ENCODE measurements at regions of chr22 and their contacts with region 1.

Region 1: DNA sequence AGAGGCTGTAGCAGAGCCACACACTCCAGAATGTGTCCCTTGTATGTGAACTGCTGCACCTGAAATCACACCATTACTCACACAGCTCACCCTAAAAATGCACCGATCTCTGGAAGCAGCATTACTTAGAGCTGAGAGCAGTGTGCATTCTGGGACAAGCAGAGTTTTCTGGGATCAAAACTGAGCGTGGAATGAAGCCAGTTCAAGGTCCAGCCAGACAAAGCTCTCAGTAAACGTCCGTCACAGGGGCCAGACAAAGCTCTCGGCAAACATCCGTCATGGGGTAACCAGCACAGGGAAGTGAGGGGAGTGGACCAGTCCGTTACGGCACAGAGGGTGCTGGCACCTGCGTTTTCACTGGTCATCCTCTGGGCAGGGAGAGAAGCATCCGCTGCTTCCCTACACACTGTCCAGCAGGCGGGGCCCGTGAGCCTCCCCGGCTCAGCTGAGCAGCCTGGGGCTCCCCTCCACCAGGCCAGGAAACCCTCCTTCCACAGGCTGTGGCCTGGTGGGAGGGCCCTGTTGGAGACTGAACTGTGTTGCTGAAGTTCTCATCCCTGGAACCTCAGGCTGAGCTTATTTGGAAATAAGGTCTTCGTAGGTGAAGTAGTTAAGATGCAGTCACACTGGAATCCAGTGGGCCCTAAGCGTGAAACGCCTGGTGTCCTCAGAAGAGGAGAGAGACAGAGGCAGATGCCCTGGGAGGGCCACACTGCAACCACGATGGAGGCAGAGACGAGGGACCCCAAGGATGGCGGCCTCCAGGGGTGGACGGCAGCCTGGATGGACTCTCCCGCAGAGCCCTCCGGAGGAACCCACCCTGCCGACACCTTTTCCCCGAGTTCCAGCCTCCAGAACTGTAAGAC is 883.9 kb downstream of the BRD1 start:
- DNase-seq: peak; percentile 33 to 77
- H3K4me3 ChIP-seq: no peak overlapping the region
- H3K27ac ChIP-seq: no peak overlapping the region
- H3K4me1 ChIP-seq: no peaks in the 10 kb centered on the region
- H3K27me3 ChIP-seq: no peaks in the 10 kb centered on the region; a peak in 2 of 7 replicates
- CTCF ChIP-seq: peak; percentile 93 to 97 (median 95)
- EP300 ChIP-seq: no peak
- POLR2A ChIP-seq: no peak
- RAD21 ChIP-seq: peak; percentile 77 to 87

Region 2: DNA sequence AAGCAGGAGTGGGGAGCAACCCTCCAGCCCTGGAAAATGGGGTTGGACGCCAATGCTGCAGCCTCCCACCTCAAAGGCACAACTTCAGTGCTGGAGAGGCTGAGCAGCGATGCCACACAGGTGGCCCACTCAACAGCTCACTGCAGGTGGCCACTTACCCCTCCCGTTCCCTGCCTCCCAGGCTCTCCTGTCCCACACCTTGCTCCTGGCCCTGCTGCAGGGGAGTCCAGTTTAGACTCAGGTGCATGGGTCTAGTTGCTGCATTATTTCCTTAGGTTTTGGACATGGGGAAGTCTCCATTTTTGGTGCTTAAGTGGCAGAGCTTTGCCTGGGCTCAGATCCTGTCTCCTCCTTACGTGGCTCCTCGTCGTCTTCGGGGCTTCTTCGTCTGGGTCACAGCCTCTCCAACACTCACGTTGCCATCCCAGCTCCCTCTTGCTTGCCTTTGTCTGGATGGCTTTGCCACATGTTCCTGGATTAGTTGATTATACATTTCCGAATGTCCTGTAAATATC is 14.5 kb before region 1 on chr22:
- CTCF ChIA-PET with region 1: interaction called, 11 read pairs
- POLR2A ChIA-PET with region 1: no interaction called
- DNase-seq: peak in 1 of 2 experiments; percentile 43
- H3K4me3 ChIP-seq: no peak overlapping the region
- H3K27ac ChIP-seq: no peak overlapping the region
- H3K4me1 ChIP-seq: no peaks in the 10 kb centered on the region
- H3K27me3 ChIP-seq: 0 out of 7 replicates have a peak, but pooled peaks cover 0 to 3% (median 0%) of the 10 kb centered on the region in 4 experiments
- CTCF ChIP-seq: no peak
- EP300 ChIP-seq: no peak
- POLR2A ChIP-seq: no peak
- RAD21 ChIP-seq: no peak

Region 3: DNA sequence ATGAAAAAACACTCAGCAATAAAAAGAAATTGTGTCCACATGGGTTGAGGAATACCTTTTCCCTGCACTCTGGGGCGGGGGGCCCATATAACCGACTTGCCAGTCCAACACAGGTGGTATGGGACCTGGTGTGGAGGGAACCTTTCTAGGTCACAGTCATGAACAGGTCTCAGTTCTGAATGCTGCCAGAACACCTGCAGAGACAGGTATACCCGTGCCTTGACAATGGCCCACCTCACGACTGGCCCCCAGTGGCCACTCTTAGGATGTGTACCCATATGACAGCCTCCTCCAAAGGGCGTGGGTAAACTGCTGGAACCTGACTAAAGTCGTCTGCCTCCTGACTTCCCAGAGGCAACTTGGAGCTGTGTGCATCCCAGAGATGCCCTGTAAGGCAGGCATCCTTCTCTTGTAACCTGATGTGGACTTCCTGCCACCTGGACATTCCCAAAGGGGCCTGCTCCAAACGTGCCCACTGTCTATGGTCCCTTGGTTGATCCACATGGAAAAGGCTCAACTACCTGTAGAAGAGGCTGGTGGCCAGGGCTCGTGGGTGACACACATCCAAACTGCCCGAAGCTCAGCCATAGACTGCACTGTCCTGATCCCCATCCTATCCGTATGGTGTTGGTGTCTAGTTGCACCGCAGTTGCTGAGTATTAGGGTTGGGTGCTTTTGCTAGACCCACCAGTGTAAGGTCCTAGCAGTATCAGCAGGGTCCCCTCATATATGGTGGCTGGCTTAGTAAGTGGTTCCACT is 24.6 kb after region 1 on chr22:
- CTCF ChIA-PET with region 1: interaction called, 22 read pairs
- POLR2A ChIA-PET with region 1: no interaction called
- DNase-seq: peak in 1 of 2 experiments; percentile 66
- H3K4me3 ChIP-seq: no peak overlapping the region
- H3K27ac ChIP-seq: no peak overlapping the region
- H3K4me1 ChIP-seq: no peaks in the 10 kb centered on the region; a peak in 1 of 7 replicates
- H3K27me3 ChIP-seq: no peaks in the 10 kb centered on the region
- CTCF ChIP-seq: peak; percentile 79 to 91 (median 85)
- EP300 ChIP-seq: no peak
- POLR2A ChIP-seq: no peak
- RAD21 ChIP-seq: peak; percentile 78 to 85

Region 4: GRCh38 chr22:49055406-49055805 is 111.6 kb after region 1 on chr22:
- CTCF ChIA-PET with region 1: no interaction called
- POLR2A ChIA-PET with region 1: no interaction called
- DNase-seq: no peak
- H3K4me3 ChIP-seq: no peak overlapping the region
- H3K27ac ChIP-seq: no peak overlapping the region
- H3K4me1 ChIP-seq: peaks cover 2 to 9% (median 6%) of the 10 kb centered on the region in 4 experiments
- H3K27me3 ChIP-seq: no peaks in the 10 kb centered on the region; a peak in 1 of 7 replicates
- CTCF ChIP-seq: no peak
- EP300 ChIP-seq: no peak
- POLR2A ChIP-seq: no peak
- RAD21 ChIP-seq: no peak

Measured in H1 (cell line).